ENCODE measurements at regions of chr6 and their contacts with region 1.

Region 1: GRCh38 chr6:33761922-33762629 is 15.4 kb upstream of the IP6K3 start:
- DNase-seq: peak; percentile 72 to 91 (median 87)
- ATAC-seq: peak; percentile 77 to 85
- H3K4me3 ChIP-seq: no peak overlapping the region
- H3K27ac ChIP-seq: peak overlapping the region; percentile 31
- H3K4me1 ChIP-seq: peaks cover 4% of the 10 kb centered on the region
- H3K27me3 ChIP-seq: no peaks in the 10 kb centered on the region

Region 2: DNA sequence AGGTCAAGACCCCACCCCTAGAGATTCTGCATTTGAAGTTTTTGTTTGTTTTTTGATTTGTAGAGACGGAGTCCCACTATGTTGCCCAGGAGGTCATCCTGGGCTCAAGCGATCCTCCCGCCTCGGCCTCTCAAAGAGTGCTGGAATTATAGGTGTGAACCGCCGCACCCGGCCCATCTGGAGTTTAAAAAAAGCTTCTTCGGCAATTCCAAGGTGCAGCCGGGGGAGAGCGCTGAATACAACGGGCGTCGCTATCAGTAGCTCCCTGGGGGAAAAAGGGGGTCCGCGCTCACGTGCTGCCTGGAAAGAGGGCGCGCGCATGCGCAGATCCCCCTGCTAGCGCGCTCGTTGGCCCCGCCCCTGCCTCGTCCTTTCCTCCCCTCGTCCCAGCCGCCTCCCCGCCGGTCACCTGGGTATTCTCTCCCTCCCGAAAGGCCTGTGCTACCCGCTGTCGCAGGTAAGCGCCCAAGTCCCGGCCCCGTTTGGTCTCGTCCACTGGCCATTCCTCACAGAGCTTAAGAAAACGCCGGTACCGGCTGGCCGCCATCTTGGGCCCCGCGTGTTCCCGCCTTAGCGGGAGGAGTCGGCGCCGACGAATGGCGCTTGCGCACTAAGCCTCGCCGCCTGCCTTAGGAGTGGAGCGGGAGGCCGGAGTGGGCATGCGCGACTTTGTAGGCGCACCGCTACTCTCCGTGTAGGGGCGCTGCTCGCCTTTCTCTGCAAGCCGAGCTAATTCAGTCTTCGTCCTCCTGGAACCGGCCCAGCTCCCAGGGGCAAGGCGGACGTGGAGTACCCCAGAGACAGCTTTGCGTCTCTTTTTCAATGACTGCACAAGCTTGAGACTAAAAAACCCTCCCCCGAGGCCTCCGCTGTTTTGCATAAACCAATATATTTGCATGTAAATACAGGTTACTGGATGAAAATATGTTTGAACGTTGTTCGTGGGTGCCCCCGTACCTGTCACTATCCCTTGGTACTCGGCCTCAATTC is 50.6 kb before region 1 on chr6 and contains the start of gene UQCC2:
- intact Hi-C with region 1: loop called in 2 of 4 experiments (anchors 2 to 5 kb)
- DNase-seq: peak; percentile 99
- ATAC-seq: peak; percentile 97 to 98
- H3K4me3 ChIP-seq: peak within 1 kb of the TSS; percentile 65
- H3K27ac ChIP-seq: peak within 1 kb of the TSS; percentile 84
- H3K4me1 ChIP-seq: peaks cover 9% of the 10 kb centered on the region
- H3K27me3 ChIP-seq: no peaks in the 10 kb centered on the region
- total RNA-seq, gene UQCC2: 188 to 264 (median 233) TPM

Region 3: GRCh38 chr6:33717934-33718455 is 44.1 kb before region 1 on chr6:
- intact Hi-C with region 1: loop called in 2 of 4 experiments (anchors 2 to 5 kb)
- DNase-seq: peak in 2 of 3 donors; percentile 81 to 82
- ATAC-seq: peak; percentile 13 to 54
- H3K4me3 ChIP-seq: no peak overlapping the region
- H3K27ac ChIP-seq: peak overlapping the region; percentile 21
- H3K4me1 ChIP-seq: peaks cover 8% of the 10 kb centered on the region
- H3K27me3 ChIP-seq: no peaks in the 10 kb centered on the region

Measured in right cardiac atrium (tissue), 5 donors.